ENCODE measurements at regions of chr13 and their contacts with region 1.

Region 1: DNA sequence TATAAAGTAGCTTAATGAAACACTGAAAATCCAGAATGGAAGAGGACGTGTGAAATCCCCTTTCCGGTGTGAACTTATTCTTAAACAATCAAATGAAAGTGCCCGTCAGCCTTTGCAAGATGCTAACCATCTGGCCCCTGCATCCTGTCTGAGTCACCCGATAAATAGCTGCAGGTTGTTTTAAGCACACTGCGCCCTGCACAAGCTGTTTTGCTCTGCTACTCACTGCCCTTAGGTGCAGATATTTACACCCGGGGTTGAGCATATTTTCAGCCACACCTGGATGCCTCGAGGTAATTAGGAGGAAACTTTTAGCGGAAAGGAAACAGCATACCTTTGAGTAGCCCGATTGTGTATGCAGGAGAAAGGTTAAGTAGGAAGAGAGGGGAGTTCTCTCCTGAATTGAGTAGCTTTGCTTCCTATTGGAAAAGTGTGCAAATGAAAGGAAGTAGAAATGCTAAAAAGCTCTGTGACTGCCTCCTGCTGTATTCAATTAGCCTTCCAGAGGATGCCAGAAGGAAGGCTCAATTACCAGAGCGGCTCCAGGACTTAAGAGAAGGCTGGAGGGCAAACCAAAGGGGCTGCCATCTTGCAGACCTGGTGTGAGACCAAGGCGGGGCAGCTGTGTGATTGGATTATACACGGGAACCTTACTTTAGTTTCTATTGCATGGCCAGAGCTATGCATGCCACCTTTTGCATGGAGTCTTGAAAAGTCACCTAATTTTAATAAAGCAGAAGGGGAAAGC is 42.5 kb downstream of the IRS2 start:
- DNase-seq: peak in 1 of 2 experiments; percentile 25
- H3K4me3 ChIP-seq: no peak overlapping the region
- H3K27ac ChIP-seq: no peak overlapping the region
- H3K4me1 ChIP-seq: no peaks in the 10 kb centered on the region; a peak in 1 of 7 replicates
- H3K27me3 ChIP-seq: no peaks in the 10 kb centered on the region
- CTCF ChIP-seq: no peak
- EP300 ChIP-seq: no peak
- POLR2A ChIP-seq: no peak
- RAD21 ChIP-seq: no peak

Region 2: DNA sequence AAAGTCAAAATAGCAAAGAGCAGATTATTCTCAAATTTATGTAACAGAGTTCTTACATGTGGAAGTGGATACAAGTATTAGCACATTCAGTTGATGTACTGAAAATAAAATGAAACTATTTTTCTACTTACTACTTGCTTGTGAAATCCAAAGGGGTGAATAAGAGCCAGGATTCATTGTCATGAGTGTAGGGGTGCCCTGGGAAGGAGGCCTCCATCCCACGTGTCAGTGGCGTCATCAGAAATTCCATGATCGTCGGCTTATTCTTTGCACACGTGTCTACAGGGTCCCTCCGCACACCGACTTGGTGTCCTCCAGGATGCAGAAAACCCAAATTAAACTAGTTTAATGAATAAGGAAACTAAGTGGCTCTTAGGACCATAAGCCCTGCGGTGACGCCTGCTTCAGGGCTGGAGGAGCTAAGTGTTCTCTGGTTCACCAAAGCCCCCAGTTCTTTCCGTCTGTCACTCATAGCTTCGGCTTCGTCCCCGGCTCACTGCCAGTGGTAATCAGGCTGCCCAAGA is 13.0 kb before region 1 on chr13:
- CTCF ChIA-PET with region 1: interaction called, 14 read pairs
- POLR2A ChIA-PET with region 1: no interaction called
- DNase-seq: no peak
- H3K4me3 ChIP-seq: no peak overlapping the region
- H3K27ac ChIP-seq: no peak overlapping the region
- H3K4me1 ChIP-seq: peaks cover 4 to 11% (median 5%) of the 10 kb centered on the region in 4 experiments; a peak in 4 of 7 replicates
- H3K27me3 ChIP-seq: no peaks in the 10 kb centered on the region
- CTCF ChIP-seq: no peak
- EP300 ChIP-seq: no peak
- POLR2A ChIP-seq: no peak
- RAD21 ChIP-seq: no peak

Region 3: GRCh38 chr13:109758937-109759480 is 15.1 kb after region 1 on chr13:
- CTCF ChIA-PET with region 1: no interaction called
- POLR2A ChIA-PET with region 1: no interaction called
- DNase-seq: no peak
- H3K4me3 ChIP-seq: no peak overlapping the region
- H3K27ac ChIP-seq: no peak overlapping the region
- H3K4me1 ChIP-seq: peaks cover 0 to 5% (median under 1%) of the 10 kb centered on the region in 4 experiments; a peak in 4 of 7 replicates
- H3K27me3 ChIP-seq: no peaks in the 10 kb centered on the region
- CTCF ChIP-seq: no peak
- EP300 ChIP-seq: no peak
- POLR2A ChIP-seq: no peak
- RAD21 ChIP-seq: no peak